ENCODE measurements at regions of chr15 and their contacts with region 1.

Region 1: DNA sequence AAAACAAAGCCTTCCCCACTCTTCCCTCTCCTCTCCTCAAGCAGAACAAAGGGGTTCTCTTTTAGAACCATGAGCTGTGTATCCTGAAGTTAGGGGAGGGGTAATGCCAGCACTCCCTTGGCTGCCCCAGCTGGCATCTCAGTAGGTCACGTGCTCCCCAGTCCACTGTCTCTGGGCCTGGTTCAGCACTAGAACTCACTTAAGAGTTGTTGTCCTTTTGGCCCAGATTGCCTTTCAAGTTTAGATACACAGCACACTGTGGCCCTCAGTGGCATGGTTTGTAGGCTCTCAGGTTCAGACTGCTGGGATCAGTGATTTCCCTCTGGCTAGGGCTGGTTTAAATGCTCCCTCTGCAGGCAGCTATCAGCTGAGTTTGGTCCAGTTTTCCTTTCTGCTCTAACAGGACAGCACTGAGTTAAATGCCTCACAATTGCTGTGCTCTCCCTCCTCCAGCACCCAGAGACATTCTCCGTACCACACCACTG is 188.4 kb upstream of the ST8SIA2 start:
- DNase-seq: peak in 1 of 2 donors; percentile 14
- ATAC-seq: peak; percentile 20 to 88 (median 67)
- H3K4me3 ChIP-seq: no peak overlapping the region
- H3K27ac ChIP-seq: no peak overlapping the region
- H3K4me1 ChIP-seq: peaks cover 0 to 10% (median 0%) of the 10 kb centered on the region in 9 donors
- H3K27me3 ChIP-seq: no peaks in the 10 kb centered on the region
- CTCF ChIP-seq: peak in 8 of 9 donors; percentile 17 to 59 (median 40)

Region 2: DNA sequence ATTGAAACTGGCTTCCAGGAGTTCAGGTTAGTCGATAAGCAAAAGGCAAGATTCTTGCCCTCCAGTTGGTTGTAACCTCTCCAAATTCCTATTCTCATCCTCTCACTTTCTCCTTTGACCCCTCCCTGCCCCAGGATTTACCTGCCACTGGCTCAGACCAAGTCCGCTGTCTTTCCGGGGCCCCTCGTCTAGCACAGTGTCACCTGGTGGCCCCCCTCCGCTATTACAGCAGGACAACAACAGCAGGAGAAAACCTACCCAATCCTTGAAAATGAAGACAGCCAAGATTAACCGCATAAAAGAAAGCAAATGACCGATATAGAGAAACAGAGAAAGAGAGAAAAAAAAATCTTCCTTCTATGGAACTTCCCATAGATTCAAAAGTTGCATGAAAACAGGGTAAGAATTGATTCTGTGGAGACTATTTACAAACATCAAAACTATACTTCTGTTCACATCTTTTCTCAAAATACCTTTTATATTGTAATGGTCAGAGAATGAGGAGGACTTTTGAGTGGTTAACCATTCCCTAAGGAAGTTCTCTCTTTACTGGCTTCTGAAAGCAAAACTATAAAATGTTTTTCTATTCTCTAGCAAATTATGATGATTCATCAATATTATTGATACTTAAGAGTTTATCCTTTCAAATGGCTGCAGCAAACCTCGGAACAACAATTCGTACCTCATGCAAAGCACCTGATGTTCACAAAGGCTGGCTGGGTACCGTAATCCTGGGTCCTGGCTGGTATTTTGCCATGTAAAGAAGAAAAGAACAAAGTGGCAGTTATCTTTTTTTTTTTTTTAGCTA is 178.4 kb after region 1 on chr15:
- intact Hi-C with region 1: loop called in 1 of 10 experiments (anchors 5 kb)
- DNase-seq: peak in 1 of 2 donors; percentile 29
- ATAC-seq: no peak
- H3K4me3 ChIP-seq: no peak overlapping the region
- H3K27ac ChIP-seq: no peak overlapping the region
- H3K4me1 ChIP-seq: no peaks in the 10 kb centered on the region
- H3K27me3 ChIP-seq: peaks cover 0 to 34% (median 21%) of the 10 kb centered on the region in 7 donors
- CTCF ChIP-seq: peak; percentile 24 to 65 (median 59)